IMR-90 (cell line): ENCODE measurements at regions of chr12 and their contacts with region 1.

Region 1: GRCh38 chr12:91094032-91094662 is 17.1 kb downstream of the LUM start:
- DNase-seq: peak; percentile 30
- ATAC-seq: peak; percentile 10; the same call in 1 of the 2 replicates
- H3K4me3 ChIP-seq: no peak overlapping the region
- H3K27ac ChIP-seq: no peak overlapping the region
- H3K4me1 ChIP-seq: no peaks in the 10 kb centered on the region
- H3K27me3 ChIP-seq: no peaks in the 10 kb centered on the region
- CTCF ChIP-seq: no peak
- POLR2A ChIP-seq: no peak
- RAD21 ChIP-seq: no peak

Region 2: GRCh38 chr12:90659060-90659459 is 435.1 kb before region 1 on chr12:
- CTCF ChIA-PET with region 1: no interaction called
- POLR2A ChIA-PET with region 1: no interaction called
- dilution Hi-C with region 1: no loop called
- in situ Hi-C with region 1: no loop called
- intact Hi-C with region 1: no loop called
- DNase-seq: no peak
- ATAC-seq: no peak
- H3K4me3 ChIP-seq: no peak overlapping the region
- H3K27ac ChIP-seq: no peak overlapping the region
- H3K4me1 ChIP-seq: no peaks in the 10 kb centered on the region
- H3K27me3 ChIP-seq: no peaks in the 10 kb centered on the region
- CTCF ChIP-seq: no peak
- POLR2A ChIP-seq: no peak
- RAD21 ChIP-seq: no peak

Region 3: DNA sequence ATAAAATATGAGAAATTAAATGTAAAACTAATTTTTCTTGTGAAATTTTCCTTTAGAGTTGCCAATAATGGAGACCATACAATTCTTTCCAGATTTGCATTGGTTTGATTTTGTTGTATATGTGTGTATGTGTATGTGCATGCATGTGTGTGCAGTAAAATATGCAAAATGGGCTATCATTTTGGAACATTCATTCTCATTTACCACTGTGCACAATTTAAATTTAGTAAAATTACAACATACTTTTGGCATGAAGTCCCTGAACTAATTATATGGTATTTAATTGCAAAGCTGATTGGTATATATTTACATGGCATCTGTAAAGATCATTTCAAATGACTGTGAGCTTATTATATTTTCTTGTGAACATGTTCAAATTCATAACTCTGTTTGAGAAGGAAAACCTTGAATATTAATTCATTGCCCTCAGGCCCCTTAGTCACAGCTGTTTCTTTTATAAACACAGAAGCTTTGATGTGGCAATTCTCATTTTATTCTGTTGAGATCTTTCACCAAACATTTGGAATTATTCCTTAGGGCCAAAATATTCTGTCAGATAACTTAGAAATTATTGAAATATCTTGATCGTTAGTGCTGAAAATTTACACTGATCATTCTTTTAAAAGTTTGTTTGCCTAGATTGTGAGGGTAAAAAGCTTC is 53.9 kb before region 1 on chr12:
- CTCF ChIA-PET with region 1: no interaction called
- POLR2A ChIA-PET with region 1: no interaction called
- dilution Hi-C with region 1: no loop called
- in situ Hi-C with region 1: no loop called
- intact Hi-C with region 1: loop called (anchors 5 kb)
- DNase-seq: peak; percentile 47
- ATAC-seq: no peak
- H3K4me3 ChIP-seq: no peak overlapping the region
- H3K27ac ChIP-seq: no peak overlapping the region
- H3K4me1 ChIP-seq: no peaks in the 10 kb centered on the region
- H3K27me3 ChIP-seq: no peaks in the 10 kb centered on the region
- CTCF ChIP-seq: no peak
- POLR2A ChIP-seq: no peak
- RAD21 ChIP-seq: no peak